Activated CD8-positive, alpha-beta T cell treated with anti-CD3 and anti-CD28 coated beads, Interleukin-2, amount 10 ng/mL, durations not matched to agents 7 days and 5 days (primary cell): ENCODE measurements at regions of chr21 and their contacts with region 1.

Region 1: GRCh38 chr21:35840197-35840799 is 220.0 kb downstream of the SETD4 start:
- DNase-seq: peak; percentile 74
- ATAC-seq: no peak
- H3K4me3 Mint-ChIP-seq: no peak overlapping the region
- H3K27ac Mint-ChIP-seq: no peak overlapping the region
- H3K4me1 Mint-ChIP-seq: no peaks in the 10 kb centered on the region
- H3K27me3 Mint-ChIP-seq: no peaks in the 10 kb centered on the region

Region 2: GRCh38 chr21:34745557-34746255 is 1094.6 kb before region 1 on chr21:
- CTCF ChIA-PET with region 1: interaction called, 23 read pairs
- POLR2A ChIA-PET with region 1: no interaction called
- DNase-seq: peak; percentile 59
- ATAC-seq: peak; percentile 79
- H3K4me3 Mint-ChIP-seq: no peak overlapping the region
- H3K27ac Mint-ChIP-seq: no peak overlapping the region
- H3K4me1 Mint-ChIP-seq: peaks cover 9% of the 10 kb centered on the region
- H3K27me3 Mint-ChIP-seq: peaks cover 23% of the 10 kb centered on the region